Transverse colon (tissue), 4 donors: ENCODE measurements at regions of chr22 and their contacts with region 1.

Region 1: DNA sequence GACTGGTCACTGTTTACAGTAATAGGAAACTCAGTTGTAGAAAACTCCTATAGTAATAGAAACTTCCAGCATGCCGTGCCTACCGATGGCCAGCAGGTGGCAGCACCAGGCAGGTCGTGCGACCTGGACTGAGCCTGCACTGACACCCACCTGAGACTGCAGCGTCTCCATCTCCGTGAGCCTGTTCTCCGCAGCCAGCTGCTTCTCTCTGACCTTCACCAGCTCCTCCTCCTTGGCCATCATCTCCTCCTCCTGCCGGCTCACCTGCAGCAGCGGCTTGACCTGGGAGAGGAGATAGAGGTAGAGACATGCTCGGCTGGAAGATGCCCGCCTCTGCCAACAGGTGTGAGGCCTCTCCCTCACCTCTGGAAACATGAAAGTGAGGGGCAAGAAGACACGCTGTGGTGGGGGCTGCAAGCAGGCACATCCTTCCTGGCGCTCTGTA is 48.5 kb downstream of the APOL1 start:
- DNase-seq: peak; percentile 85
- H3K4me3 ChIP-seq: no peak overlapping the region
- H3K27ac ChIP-seq: peak overlapping the region; percentile 65 to 76 (median 72)
- H3K4me1 ChIP-seq: peaks cover 0 to 33% (median 13%) of the 10 kb centered on the region in 4 donors
- H3K27me3 ChIP-seq: no peaks in the 10 kb centered on the region
- CTCF ChIP-seq: peak; percentile 92 to 97 (median 96)
- EP300 ChIP-seq: no peak
- POLR2A ChIP-seq: peak; percentile 13

Region 2: GRCh38 chr22:36461669-36462649 is 160.6 kb after region 1 on chr22:
- in situ Hi-C with region 1: loop called in 1 of 4 experiments (anchors 10 kb)
- intact Hi-C with region 1: no loop called
- DNase-seq: no peak
- H3K4me3 ChIP-seq: no peak overlapping the region
- H3K27ac ChIP-seq: peak overlapping the region; percentile 98
- H3K4me1 ChIP-seq: peaks cover 25 to 66% (median 53%) of the 10 kb centered on the region in 4 donors
- H3K27me3 ChIP-seq: no peaks in the 10 kb centered on the region
- CTCF ChIP-seq: no peak
- EP300 ChIP-seq: no peak
- POLR2A ChIP-seq: no peak

Region 3: DNA sequence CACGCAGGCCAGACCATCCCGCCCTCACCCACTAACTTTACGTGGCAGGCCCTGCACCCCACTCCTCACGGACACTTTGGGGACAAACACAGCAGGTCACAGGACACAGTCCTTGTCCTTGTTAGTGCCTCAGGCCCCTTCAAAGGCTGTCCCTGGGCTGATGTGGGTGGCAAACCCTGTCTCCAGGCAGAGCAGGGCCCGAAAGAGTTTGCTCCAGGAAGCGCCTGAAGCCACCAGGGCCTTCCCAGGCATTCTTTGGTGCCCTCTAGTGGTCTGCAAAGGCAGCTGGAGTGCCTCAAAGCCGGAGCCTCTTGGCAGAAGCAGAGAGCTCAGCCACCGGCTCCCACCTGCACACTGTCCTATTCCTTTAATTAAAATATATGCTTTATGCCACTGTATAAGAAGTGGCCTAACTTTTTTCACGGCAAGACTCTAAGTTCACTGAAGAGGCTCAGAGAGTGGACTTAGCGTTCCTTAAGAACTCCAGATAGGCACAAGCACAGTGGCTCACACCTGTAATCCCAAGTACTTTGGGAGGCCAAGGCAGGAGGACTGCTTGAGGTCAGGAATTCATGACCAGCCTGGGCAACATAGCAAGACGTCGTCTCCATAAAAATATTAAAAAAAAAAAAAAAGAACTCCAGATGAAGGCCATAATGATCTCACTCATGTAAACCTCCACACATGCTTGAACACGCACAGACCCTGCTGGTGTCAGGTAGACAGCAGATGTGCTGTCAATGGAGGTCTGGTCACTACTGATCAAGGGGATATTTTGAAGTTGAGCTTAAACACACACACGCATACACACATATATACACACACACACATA is 169.0 kb after region 1 on chr22:
- in situ Hi-C with region 1: loop called (anchors 5 to 10 kb)
- intact Hi-C with region 1: loop called (anchors 5 kb)
- DNase-seq: peak; percentile 87
- H3K4me3 ChIP-seq: no peak overlapping the region
- H3K27ac ChIP-seq: peak overlapping the region; percentile 98
- H3K4me1 ChIP-seq: peaks cover 20 to 51% (median 30%) of the 10 kb centered on the region in 4 donors
- H3K27me3 ChIP-seq: no peaks in the 10 kb centered on the region
- CTCF ChIP-seq: peak; percentile 92 to 95 (median 94)
- EP300 ChIP-seq: no peak
- POLR2A ChIP-seq: no peak

Region 4: GRCh38 chr22:36481393-36482168 is 180.2 kb after region 1 on chr22 and contains the start of gene TXN2:
- in situ Hi-C with region 1: loop called in 3 of 4 experiments (anchors 5 to 10 kb)
- intact Hi-C with region 1: no loop called
- DNase-seq: peak; percentile 97
- H3K4me3 ChIP-seq: peak within 1 kb of the TSS; percentile 60 to 80 (median 70)
- H3K27ac ChIP-seq: peak within 1 kb of the TSS; percentile 99 to 100 (median 100)
- H3K4me1 ChIP-seq: peaks cover 6 to 15% (median 10%) of the 10 kb centered on the region in 4 donors
- H3K27me3 ChIP-seq: no peaks in the 10 kb centered on the region
- CTCF ChIP-seq: peak in 2 of 5 experiments; percentile 4 to 10
- EP300 ChIP-seq: no peak
- POLR2A ChIP-seq: peak; percentile 91
- total RNA-seq, gene TXN2: 68.5 to 317 (median 93.3) TPM